Activated CD8-positive, alpha-beta T cell treated with anti-CD3 and anti-CD28 coated beads, Interleukin-2, amount 10 ng/mL, durations not matched to agents 7 days and 5 days (primary cell): ENCODE measurements at regions of chr2 and their contacts with region 1.

Region 1: GRCh38 chr2:121530212-121530705 is 421 bp upstream of the RNU4ATAC start:
- DNase-seq: peak; percentile 90
- ATAC-seq: peak; percentile 71
- H3K4me3 Mint-ChIP-seq: peak overlapping the region; percentile 97
- H3K27ac Mint-ChIP-seq: peak overlapping the region; percentile 99
- H3K4me1 Mint-ChIP-seq: peaks cover 58% of the 10 kb centered on the region
- H3K27me3 Mint-ChIP-seq: no peaks in the 10 kb centered on the region

Region 2: GRCh38 chr2:121545257-121545656 is 15.0 kb after region 1 on chr2:
- CTCF ChIA-PET with region 1: interaction called, 4 read pairs
- POLR2A ChIA-PET with region 1: interaction called, 20 read pairs
- DNase-seq: no peak
- ATAC-seq: no peak
- H3K4me3 Mint-ChIP-seq: no peak overlapping the region
- H3K27ac Mint-ChIP-seq: no peak overlapping the region
- H3K4me1 Mint-ChIP-seq: peaks cover 7% of the 10 kb centered on the region
- H3K27me3 Mint-ChIP-seq: no peaks in the 10 kb centered on the region

Region 3: GRCh38 chr2:121649596-121650314 is 119.5 kb after region 1 on chr2:
- CTCF ChIA-PET with region 1: interaction called, 7 read pairs
- POLR2A ChIA-PET with region 1: interaction called, 176 read pairs
- DNase-seq: peak; percentile 97
- ATAC-seq: peak; percentile 95
- H3K4me3 Mint-ChIP-seq: peak overlapping the region; percentile 100
- H3K27ac Mint-ChIP-seq: peak overlapping the region; percentile 98
- H3K4me1 Mint-ChIP-seq: peaks cover 57% of the 10 kb centered on the region
- H3K27me3 Mint-ChIP-seq: no peaks in the 10 kb centered on the region

Region 4: DNA sequence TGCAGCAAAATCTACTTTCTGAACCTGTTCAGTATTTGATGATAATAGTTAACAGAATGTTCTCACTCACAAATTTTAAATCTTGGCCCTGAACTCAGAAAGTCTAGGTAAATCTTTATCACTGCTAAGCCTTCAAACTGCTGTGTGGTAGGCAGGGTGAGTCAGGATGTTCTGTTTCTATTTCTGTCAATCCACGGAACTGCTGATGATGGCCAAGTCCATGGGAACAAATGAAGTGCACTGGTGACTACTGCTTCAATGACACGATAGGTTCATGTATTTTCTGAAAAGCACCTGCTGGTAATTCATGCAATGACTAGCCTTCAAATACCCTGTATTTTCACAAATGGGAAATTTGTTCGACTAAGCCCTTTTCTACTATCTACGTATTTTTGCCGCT is 192.2 kb after region 1 on chr2:
- CTCF ChIA-PET with region 1: interaction called, 32 read pairs
- POLR2A ChIA-PET with region 1: interaction called, 13 read pairs
- DNase-seq: no peak
- ATAC-seq: no peak
- H3K4me3 Mint-ChIP-seq: no peak overlapping the region
- H3K27ac Mint-ChIP-seq: no peak overlapping the region
- H3K4me1 Mint-ChIP-seq: peaks cover 14% of the 10 kb centered on the region
- H3K27me3 Mint-ChIP-seq: no peaks in the 10 kb centered on the region

Region 5: GRCh38 chr2:121755236-121756111 is 225.2 kb after region 1 on chr2 and contains the start of gene TSN:
- CTCF ChIA-PET with region 1: no interaction called
- POLR2A ChIA-PET with region 1: interaction called, 10 read pairs
- DNase-seq: peak; percentile 99
- ATAC-seq: peak; percentile 100
- H3K4me3 Mint-ChIP-seq: peak within 1 kb of the TSS; percentile 99
- H3K27ac Mint-ChIP-seq: peak within 1 kb of the TSS; percentile 97
- H3K4me1 Mint-ChIP-seq: peaks cover 26% of the 10 kb centered on the region
- H3K27me3 Mint-ChIP-seq: no peaks in the 10 kb centered on the region
- total RNA-seq, gene TSN: 55.4 to 57.9 TPM